ENCODE measurements at regions of chr17 and their contacts with region 1.

Region 1: GRCh38 chr17:17356149-17356930 is 53.2 kb downstream of the NT5M start:
- DNase-seq: peak; percentile 74
- H3K4me3 ChIP-seq: no peak overlapping the region
- H3K27ac ChIP-seq: no peak overlapping the region
- H3K27me3 ChIP-seq: peaks cover 4% of the 10 kb centered on the region
- CTCF ChIP-seq: peak; percentile 100

Region 2: DNA sequence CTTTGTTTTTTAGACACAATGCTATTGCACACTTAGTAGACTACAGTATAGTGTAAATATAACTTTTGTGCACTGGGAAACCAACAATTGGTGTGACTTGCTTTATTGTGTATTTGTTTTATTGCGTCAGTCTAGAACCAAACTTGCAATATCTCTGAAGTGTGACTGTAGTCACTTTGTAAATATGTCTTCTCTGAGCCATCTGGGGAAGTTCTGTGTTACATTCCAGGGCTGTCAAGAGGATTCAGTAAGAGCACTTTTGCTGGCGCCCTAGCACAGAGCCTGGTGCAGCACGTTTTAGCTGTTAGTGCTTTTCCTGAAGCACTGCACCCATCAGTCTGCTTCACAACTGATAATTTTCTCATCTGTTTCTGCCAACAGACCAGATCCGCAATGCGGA is 20.0 kb after region 1 on chr17:
- CTCF ChIA-PET with region 1: no interaction called
- POLR2A ChIA-PET with region 1: no interaction called
- DNase-seq: peak; percentile 18
- H3K4me3 ChIP-seq: no peak overlapping the region
- H3K27ac ChIP-seq: peak overlapping the region; percentile 47
- H3K27me3 ChIP-seq: peaks cover 21% of the 10 kb centered on the region
- CTCF ChIP-seq: no peak

Region 3: GRCh38 chr17:17511881-17512858 is 155.8 kb after region 1 on chr17:
- CTCF ChIA-PET with region 1: interaction called, 10 read pairs
- POLR2A ChIA-PET with region 1: no interaction called
- DNase-seq: peak; percentile 75
- H3K4me3 ChIP-seq: no peak overlapping the region
- H3K27ac ChIP-seq: no peak overlapping the region
- H3K27me3 ChIP-seq: no peaks in the 10 kb centered on the region
- CTCF ChIP-seq: no peak

Region 4: GRCh38 chr17:17568749-17569195 is 212.4 kb after region 1 on chr17:
- CTCF ChIA-PET with region 1: interaction called, 19 read pairs
- POLR2A ChIA-PET with region 1: no interaction called
- DNase-seq: no peak
- H3K4me3 ChIP-seq: no peak overlapping the region
- H3K27ac ChIP-seq: no peak overlapping the region
- H3K27me3 ChIP-seq: no peaks in the 10 kb centered on the region
- CTCF ChIP-seq: peak; percentile 82

Region 5: DNA sequence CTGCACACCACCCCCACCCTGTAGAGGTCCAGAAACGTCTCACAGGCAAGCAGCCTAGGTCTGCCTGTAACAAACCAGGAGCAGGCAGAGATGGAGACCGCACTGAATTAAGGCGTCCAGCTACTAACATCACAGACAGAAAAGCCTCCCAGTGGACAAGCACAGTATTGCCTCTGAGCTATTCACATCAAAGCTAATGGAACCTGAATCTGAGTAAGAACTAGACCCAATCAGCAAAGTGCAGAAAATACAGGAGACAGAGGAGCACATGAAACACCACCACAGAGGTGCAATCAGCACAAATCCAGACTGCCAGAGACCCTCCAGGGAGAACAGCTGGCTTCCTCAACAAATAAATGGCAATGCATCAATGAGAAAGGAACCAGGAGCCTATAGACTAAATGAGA is 257.4 kb after region 1 on chr17:
- CTCF ChIA-PET with region 1: interaction called, 32 read pairs
- POLR2A ChIA-PET with region 1: no interaction called
- DNase-seq: peak; percentile 46
- H3K4me3 ChIP-seq: no peak overlapping the region
- H3K27ac ChIP-seq: no peak overlapping the region
- H3K27me3 ChIP-seq: no peaks in the 10 kb centered on the region
- CTCF ChIP-seq: peak; percentile 84

Region 6: GRCh38 chr17:17641621-17642409 is 285.5 kb after region 1 on chr17:
- CTCF ChIA-PET with region 1: interaction called, 121 read pairs
- POLR2A ChIA-PET with region 1: no interaction called
- DNase-seq: peak; percentile 56
- H3K4me3 ChIP-seq: no peak overlapping the region
- H3K27ac ChIP-seq: no peak overlapping the region
- H3K27me3 ChIP-seq: peaks cover 5% of the 10 kb centered on the region
- CTCF ChIP-seq: peak; percentile 87